ENCODE measurements at regions of chr17 and their contacts with region 1.

Region 1: GRCh38 chr17:59786536-59787319 is 79.3 kb downstream of the VMP1 start:
- DNase-seq: peak; percentile 100
- ATAC-seq: peak; percentile 97
- H3K4me3 ChIP-seq: peak overlapping the region in 1 of 3 experiments; percentile 51; a peak in 2 of 6 replicates
- H3K27ac ChIP-seq: peak overlapping the region; percentile 97
- H3K4me1 ChIP-seq: peaks cover 94% of the 10 kb centered on the region
- H3K27me3 ChIP-seq: no peaks in the 10 kb centered on the region
- CTCF ChIP-seq: peak; percentile 20
- EP300 ChIP-seq: peak; percentile 93 to 100
- POLR2A ChIP-seq: peak; percentile 65 to 86
- RAD21 ChIP-seq: no peak

Region 2: GRCh38 chr17:59762513-59763374 is 24.0 kb before region 1 on chr17:
- CTCF ChIA-PET with region 1: no interaction called
- POLR2A ChIA-PET with region 1: interaction called, 21 read pairs
- in situ Hi-C with region 1: loop called (anchors 5 kb)
- intact Hi-C with region 1: no loop called
- DNase-seq: no peak
- ATAC-seq: no peak
- H3K4me3 ChIP-seq: no peak overlapping the region
- H3K27ac ChIP-seq: peak overlapping the region; percentile 76
- H3K4me1 ChIP-seq: peaks cover 37% of the 10 kb centered on the region
- H3K27me3 ChIP-seq: no peaks in the 10 kb centered on the region
- CTCF ChIP-seq: no peak
- EP300 ChIP-seq: no peak
- POLR2A ChIP-seq: no peak
- RAD21 ChIP-seq: no peak

Region 3: DNA sequence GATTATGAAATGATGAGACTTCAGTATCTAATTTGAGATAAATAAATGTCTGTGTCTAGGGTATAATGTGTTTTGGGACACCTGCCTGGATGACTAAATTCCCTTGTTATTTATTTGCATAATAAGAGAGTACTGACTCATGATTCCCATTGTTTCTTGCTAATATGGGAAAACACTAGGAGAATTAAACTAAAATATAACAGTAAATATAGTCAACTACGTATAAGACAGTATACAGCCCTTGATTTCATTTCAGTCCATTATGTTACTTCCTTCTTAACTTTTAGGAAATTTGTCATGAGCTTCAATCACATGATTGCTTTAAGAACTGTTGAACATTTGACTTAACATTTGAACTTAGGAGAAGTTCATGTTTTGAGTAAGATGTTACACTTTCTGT is 16.8 kb before region 1 on chr17:
- CTCF ChIA-PET with region 1: no interaction called
- POLR2A ChIA-PET with region 1: interaction called, 26 read pairs
- in situ Hi-C with region 1: no loop called
- intact Hi-C with region 1: loop called (anchors 2 kb)
- DNase-seq: no peak
- ATAC-seq: no peak
- H3K4me3 ChIP-seq: no peak overlapping the region
- H3K27ac ChIP-seq: no peak overlapping the region
- H3K4me1 ChIP-seq: peaks cover 19% of the 10 kb centered on the region
- H3K27me3 ChIP-seq: no peaks in the 10 kb centered on the region
- CTCF ChIP-seq: no peak
- EP300 ChIP-seq: no peak
- POLR2A ChIP-seq: no peak
- RAD21 ChIP-seq: no peak

Region 4: DNA sequence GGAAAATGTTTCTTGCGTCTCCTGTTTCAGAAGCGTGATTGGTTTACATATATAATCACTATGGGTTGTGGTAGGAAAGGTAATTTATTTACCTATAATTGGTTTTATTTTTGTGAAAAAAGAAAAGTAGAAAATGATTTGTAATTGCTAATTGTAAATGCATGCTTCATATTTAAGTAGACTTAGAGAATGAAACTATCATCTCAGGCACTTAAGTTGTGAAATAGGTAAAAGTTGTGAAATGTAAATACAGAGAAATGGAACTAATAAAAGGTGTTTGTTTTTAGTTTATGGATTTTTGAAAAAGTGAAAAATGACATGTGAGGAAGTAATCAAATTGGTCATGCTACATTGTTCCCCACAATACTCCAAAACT is 16.6 kb after region 1 on chr17:
- CTCF ChIA-PET with region 1: no interaction called
- POLR2A ChIA-PET with region 1: interaction called, 9 read pairs
- in situ Hi-C with region 1: no loop called
- intact Hi-C with region 1: loop called (anchors 2 kb)
- DNase-seq: peak; percentile 35
- ATAC-seq: no peak
- H3K4me3 ChIP-seq: no peak overlapping the region
- H3K27ac ChIP-seq: peak overlapping the region; percentile 54
- H3K4me1 ChIP-seq: peaks cover 17% of the 10 kb centered on the region
- H3K27me3 ChIP-seq: no peaks in the 10 kb centered on the region; a peak in 1 of 5 replicates
- CTCF ChIP-seq: no peak
- EP300 ChIP-seq: peak in 1 of 2 experiments; percentile 21; a peak in 1 of 4 replicates
- POLR2A ChIP-seq: no peak
- RAD21 ChIP-seq: no peak

Region 5: GRCh38 chr17:59829217-59830006 is 42.7 kb after region 1 on chr17:
- CTCF ChIA-PET with region 1: no interaction called
- POLR2A ChIA-PET with region 1: interaction called, 501 read pairs
- in situ Hi-C with region 1: no loop called
- intact Hi-C with region 1: loop called (anchors 1 kb)
- DNase-seq: peak; percentile 97
- ATAC-seq: peak; percentile 94
- H3K4me3 ChIP-seq: peak overlapping the region in 1 of 3 experiments; percentile 26; a peak in 1 of 6 replicates
- H3K27ac ChIP-seq: peak overlapping the region; percentile 90
- H3K4me1 ChIP-seq: peaks cover 84% of the 10 kb centered on the region
- H3K27me3 ChIP-seq: no peaks in the 10 kb centered on the region
- CTCF ChIP-seq: no peak
- EP300 ChIP-seq: peak; percentile 51 to 61; a peak in 2 of 4 replicates
- POLR2A ChIP-seq: 0 out of 4 replicates have a peak, but pooled peaks of 1 of the 2 experiments have one; percentile 20
- RAD21 ChIP-seq: no peak; the same call in 1 of the 2 replicates

Region 6: GRCh38 chr17:59892924-59893676 is 106.4 kb after region 1 on chr17 and contains the starts of genes RPS6KB1 and TUBD1:
- CTCF ChIA-PET with region 1: no interaction called
- POLR2A ChIA-PET with region 1: no interaction called
- in situ Hi-C with region 1: no loop called
- intact Hi-C with region 1: no loop called
- DNase-seq: peak; percentile 99
- ATAC-seq: peak; percentile 98
- H3K4me3 ChIP-seq: peak within 1 kb of the TSS; percentile 64 to 98 (median 86)
- H3K27ac ChIP-seq: peak within 1 kb of the TSS; percentile 77
- H3K4me1 ChIP-seq: peaks cover 52% of the 10 kb centered on the region
- H3K27me3 ChIP-seq: no peaks in the 10 kb centered on the region; a peak in 1 of 5 replicates
- CTCF ChIP-seq: no peak; the same call in 1 of the 2 replicates
- EP300 ChIP-seq: no peak
- POLR2A ChIP-seq: peak; percentile 96 to 98
- RAD21 ChIP-seq: peak; percentile 31; the same call in 1 of the 2 replicates
- total RNA-seq, gene RPS6KB1: 42.2 and 44.3 TPM in 2 replicates
- total RNA-seq, gene TUBD1: 25.9 and 38.7 TPM in 2 replicates

Measured in HepG2 (cell line).